ENCODE measurements at regions of chr20 and their contacts with region 1.

Region 1: GRCh38 chr20:36808317-36809257 is 35.0 kb upstream of the DSN1 start:
- DNase-seq: peak; percentile 80
- CTCF ChIP-seq: peak; percentile 84

Region 2: GRCh38 chr20:36792422-36792821 is 16.2 kb before region 1 on chr20:
- CTCF ChIA-PET with region 1: interaction called, 26 read pairs
- POLR2A ChIA-PET with region 1: interaction called, 3 read pairs
- DNase-seq: peak; percentile 57
- CTCF ChIP-seq: peak; percentile 29

Region 3: DNA sequence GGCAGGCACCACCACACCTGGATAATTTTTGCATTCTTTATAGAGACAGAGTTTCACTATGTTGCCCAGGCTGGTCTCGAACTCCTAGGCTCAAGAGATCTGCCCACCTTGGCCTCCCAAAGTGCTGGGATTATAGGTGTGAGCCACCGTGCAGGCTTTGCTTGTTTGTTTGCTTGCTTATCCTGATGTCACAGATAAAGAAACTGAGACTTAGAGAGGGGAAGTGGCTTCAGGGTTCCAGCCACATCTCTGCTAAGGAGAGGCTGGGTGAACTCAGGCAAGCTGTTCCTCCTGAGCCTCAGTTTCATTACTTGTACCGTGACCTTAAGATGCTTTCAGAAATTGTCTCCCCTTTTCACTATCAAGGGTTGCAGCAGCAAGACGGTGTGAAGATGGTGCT is 18.9 kb after region 1 on chr20:
- CTCF ChIA-PET with region 1: interaction called, 12 read pairs
- POLR2A ChIA-PET with region 1: no interaction called
- DNase-seq: peak; percentile 78
- CTCF ChIP-seq: no peak

Region 4: GRCh38 chr20:36861875-36862801 is 53.6 kb after region 1 on chr20:
- CTCF ChIA-PET with region 1: interaction called, 14 read pairs
- POLR2A ChIA-PET with region 1: no interaction called
- DNase-seq: no peak
- CTCF ChIP-seq: no peak

Region 5: DNA sequence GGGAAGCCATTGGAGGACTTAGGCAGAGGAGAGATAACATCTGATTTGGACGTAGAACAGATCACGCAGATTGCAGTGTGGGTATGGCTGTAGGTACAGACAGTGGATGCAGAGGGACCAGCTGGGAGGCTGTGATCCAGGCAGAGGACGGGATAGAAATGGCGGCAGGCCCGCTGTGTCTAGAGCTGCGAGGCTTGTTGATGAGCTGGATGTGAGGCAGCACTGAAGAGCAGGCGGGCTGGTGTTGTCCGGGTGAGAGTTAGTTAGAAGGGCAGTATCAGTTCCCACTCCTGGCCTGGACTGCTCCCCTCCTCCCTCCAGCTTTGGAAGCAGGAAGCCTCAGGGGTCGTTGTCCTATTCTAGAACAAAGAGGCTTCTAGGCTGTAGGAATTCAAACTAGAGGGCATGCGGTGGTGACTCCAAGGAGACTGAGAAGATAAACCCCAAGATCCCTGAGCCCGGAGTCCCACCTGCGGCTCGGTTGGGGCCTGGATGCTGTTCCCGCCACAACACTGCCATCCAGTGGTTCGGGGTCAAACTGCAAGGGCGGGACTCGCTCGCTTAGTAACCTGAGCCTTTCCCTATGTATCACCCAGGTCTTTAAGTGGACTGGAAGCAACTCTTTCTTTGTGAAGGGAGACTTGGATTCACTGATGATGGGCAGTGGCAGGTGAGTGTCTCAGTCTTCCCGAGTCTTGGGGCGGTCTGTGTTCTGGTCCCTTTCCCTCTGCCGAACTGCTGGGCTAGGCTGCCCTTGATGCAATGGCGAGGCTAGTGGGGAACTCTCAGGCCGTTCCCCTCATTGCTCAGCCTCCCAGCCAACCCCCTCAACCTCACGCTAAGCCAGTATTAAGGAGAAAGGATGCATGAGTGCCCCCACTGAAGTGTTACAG is 78.5 kb after region 1 on chr20:
- CTCF ChIA-PET with region 1: interaction called, 37 read pairs
- POLR2A ChIA-PET with region 1: no interaction called
- DNase-seq: peak; percentile 89
- CTCF ChIP-seq: peak; percentile 93

Region 6: GRCh38 chr20:37152284-37152683 is 343.7 kb after region 1 on chr20:
- CTCF ChIA-PET with region 1: no interaction called
- POLR2A ChIA-PET with region 1: no interaction called
- DNase-seq: no peak
- CTCF ChIP-seq: no peak